ENCODE measurements at regions of chr19 and their contacts with region 1.

Region 1: GRCh38 chr19:30640252-30640965 is 268.2 kb downstream of the ZNF536 start:
- DNase-seq: no peak
- ATAC-seq: no peak
- H3K4me3 ChIP-seq: no peak overlapping the region
- H3K27ac ChIP-seq: no peak overlapping the region
- H3K4me1 ChIP-seq: no peaks in the 10 kb centered on the region
- H3K27me3 ChIP-seq: peaks cover 6% of the 10 kb centered on the region; the same call in 1 of the 2 replicates
- CTCF ChIP-seq: no peak

Region 2: DNA sequence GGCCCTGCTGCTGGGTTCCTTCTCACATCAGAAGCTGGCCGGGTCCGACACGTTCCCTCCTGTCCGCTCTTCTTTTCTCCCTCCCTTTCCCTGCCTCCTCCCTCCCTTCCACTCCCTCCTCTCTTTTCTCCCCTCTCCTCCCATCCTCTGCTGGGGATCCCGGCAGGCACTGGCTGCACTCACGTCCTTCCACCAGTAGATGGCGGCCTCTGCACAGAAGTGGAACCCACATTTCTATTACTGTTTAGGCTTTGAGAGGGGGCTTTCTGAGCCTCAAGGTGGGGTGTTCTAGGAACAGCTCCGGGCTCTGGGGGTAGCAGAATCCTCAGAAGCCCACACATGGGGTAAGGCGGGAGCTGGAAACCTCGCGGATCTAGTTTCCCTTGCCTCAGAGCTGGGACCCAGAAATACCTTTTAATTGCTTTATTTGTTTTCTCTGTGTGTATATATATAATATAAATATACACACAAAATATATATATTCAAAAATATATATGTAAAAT is 25.9 kb after region 1 on chr19:
- CTCF ChIA-PET with region 1: no interaction called
- POLR2A ChIA-PET with region 1: interaction called, 18 read pairs
- in situ Hi-C with region 1: no loop called
- intact Hi-C with region 1: no loop called
- DNase-seq: peak; percentile 25
- ATAC-seq: peak; percentile 57
- H3K4me3 ChIP-seq: no peak overlapping the region
- H3K27ac ChIP-seq: no peak overlapping the region
- H3K4me1 ChIP-seq: 0 out of 2 replicates have a peak, but pooled peaks cover 3% of the 10 kb centered on the region
- H3K27me3 ChIP-seq: peaks cover 23% of the 10 kb centered on the region
- CTCF ChIP-seq: peak; percentile 99

Measured in Panc1 (cell line).